ENCODE measurements at regions of chr17 and their contacts with region 1.

Region 1: DNA sequence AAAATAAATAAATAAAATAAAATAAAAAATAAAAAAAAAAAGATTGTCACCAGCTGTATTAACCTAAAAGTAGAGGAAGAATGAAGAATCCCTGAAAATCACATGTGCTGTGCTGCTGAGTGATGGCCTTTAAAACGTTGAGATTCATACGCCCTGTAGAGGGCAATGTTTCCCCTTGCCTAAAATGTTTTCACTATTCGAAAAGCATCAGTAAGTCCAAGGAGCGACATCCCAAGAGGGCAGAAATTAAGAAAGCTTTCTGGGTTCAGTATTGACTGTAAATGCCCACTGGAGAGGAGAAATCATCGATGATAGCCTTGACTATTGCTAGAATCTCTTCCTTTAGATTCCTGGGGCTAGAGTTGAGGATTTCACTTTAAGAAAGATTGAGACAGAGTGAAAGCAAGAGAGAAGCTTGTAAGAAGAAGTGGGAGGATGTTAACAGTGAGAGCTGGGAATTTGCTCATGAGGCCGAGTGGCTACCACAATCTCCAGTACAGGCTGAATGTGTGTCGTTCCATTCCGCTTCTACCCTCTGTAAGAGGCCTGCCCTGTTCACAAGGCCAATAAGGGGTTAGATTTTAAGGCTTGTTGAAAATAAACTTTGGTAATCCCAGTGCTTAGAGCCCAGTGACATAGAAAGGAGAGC is 170.8 kb upstream of the FAM20A start:
- DNase-seq: no peak
- H3K4me3 ChIP-seq: no peak overlapping the region
- CTCF ChIP-seq: peak; percentile 53

Region 2: DNA sequence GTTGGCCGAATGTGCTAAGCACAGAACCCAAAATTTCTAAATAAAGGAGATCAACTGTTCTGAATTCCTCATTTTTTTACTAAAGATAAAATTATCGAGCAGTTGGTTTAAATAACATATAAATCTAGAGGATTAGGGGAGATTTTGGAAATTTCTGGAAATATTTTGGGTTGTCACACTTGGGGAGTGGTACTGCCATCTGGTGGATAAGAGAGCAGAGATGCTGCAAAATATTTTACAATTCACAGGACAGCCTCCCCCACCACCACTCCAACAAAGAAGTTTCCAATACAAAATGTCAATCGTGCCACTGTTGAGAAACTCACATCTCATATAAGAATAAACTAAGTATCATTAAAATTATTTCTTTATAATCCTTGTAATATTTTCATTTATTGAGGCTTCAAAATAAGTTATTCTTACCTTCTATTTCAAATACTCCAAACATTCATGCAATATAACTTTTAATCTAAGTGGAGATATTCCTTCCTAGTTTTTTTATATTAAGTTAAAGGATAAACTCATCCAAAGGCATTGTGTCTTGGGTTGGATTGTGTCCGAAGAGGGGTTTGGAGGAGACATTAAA is 200.2 kb after region 1 on chr17:
- CTCF ChIA-PET with region 1: interaction called, 38 read pairs
- POLR2A ChIA-PET with region 1: no interaction called
- DNase-seq: no peak
- H3K4me3 ChIP-seq: no peak overlapping the region
- CTCF ChIP-seq: peak; percentile 59

Region 3: DNA sequence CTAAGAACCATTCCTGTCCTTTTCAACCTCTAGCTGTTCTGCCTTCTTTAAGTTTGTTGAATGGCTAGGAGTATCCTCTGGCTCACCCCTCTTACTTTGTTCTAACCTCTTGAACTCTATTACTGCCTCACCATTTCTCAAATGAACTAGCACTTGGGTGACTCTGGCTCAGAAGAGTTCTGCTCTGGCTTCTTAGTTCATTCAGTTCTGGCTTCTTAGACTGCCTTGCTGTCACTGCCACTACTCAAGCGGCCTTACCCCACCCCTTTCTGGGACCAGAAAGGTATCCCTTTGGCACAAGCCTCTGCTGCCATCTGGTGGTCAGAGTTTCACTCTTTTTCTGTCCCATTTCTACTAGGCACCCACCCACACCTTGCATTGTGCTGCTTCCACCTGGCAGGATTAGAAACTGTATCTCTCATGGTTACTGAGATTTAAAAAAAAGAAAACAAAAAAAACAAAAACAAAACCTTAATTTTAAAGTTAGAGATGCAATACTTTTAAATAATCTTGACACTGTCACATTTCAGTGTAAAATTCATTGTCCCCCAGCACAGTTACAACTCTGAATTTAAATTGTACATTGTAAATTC is 463.4 kb after region 1 on chr17:
- CTCF ChIA-PET with region 1: interaction called, 243 read pairs
- POLR2A ChIA-PET with region 1: no interaction called
- DNase-seq: no peak
- H3K4me3 ChIP-seq: no peak overlapping the region
- CTCF ChIP-seq: peak; percentile 69